PC-3 (cell line): ENCODE measurements at regions of chr13 and their contacts with region 1.

Region 1: DNA sequence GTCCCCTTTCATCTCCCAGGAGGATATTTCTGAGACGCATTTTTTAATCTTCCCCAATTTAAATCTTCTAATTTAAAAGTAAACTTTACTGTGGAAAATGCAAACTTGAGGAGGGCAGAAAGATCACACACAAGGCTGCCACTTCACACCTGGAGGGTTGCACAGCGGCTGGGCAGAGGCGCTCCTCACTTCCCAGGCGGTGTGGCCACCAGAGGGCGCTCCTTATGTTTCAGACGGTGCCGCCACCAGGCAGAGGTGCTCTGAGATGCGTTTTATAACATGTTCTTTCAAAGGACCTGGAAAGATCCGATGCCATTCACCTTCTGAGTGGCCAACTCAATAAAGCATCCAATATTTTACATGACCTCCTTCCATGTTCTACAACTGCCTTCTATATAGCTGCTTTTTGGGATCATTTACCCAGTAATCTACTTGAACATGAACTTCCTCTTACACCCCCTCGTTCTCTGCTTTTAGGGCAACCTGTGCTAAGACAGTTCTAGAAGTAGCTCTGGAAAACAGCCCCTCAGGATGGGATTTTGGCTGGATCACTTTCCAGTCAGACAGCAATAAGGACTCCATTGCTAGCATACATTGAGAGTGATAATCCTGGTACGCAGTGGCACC is 14.8 kb upstream of the MTUS2 start:
- DNase-seq: peak; percentile 41
- ATAC-seq: no peak
- H3K4me3 ChIP-seq: no peak overlapping the region
- H3K27ac ChIP-seq: no peak overlapping the region
- H3K4me1 ChIP-seq: no peaks in the 10 kb centered on the region
- H3K27me3 ChIP-seq: peaks cover 25% of the 10 kb centered on the region
- CTCF ChIP-seq: peak; percentile 62

Region 2: DNA sequence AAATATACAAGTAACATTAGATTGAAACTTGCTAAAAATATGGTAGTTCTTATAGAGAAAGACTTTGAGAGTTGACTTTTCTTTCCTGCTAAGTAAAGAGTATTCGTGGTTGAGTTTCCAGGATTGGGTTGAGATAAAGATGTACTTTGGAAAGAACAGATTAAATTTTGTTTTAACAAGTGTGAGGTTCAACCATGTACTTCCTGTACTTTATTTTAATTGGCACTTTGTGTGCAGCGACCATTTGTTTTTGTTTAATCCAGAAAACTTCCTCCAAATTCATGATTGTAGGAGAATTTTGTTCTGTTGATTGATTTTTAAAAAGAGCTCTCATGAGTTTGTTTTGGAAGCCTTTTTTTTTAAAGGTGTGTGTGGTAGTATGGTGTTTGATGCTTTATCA is 620.0 kb before region 1 on chr13:
- CTCF ChIA-PET with region 1: no interaction called
- POLR2A ChIA-PET with region 1: no interaction called
- intact Hi-C with region 1: no loop called
- DNase-seq: no peak
- ATAC-seq: no peak
- H3K4me3 ChIP-seq: no peak overlapping the region
- H3K27ac ChIP-seq: no peak overlapping the region
- H3K4me1 ChIP-seq: peaks cover 18% of the 10 kb centered on the region
- H3K27me3 ChIP-seq: no peaks in the 10 kb centered on the region
- CTCF ChIP-seq: no peak

Region 3: DNA sequence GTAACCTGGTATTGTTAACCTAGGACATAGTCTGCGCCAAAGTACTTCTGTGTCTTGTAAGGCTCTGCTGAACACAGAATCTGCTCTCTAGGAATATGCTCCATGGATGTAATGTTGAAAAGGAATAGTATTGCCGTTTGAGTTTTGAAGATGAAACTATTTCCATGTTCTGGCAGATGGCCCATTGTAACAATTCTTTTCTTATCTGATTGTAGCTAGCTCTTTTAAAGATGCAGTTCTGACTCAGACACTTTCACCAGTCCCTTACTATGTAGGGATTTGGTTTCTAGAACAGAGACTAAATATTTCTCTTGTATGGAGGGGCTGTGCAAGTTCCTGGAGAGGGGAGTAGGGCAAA is 200.4 kb after region 1 on chr13:
- CTCF ChIA-PET with region 1: no interaction called
- POLR2A ChIA-PET with region 1: no interaction called
- intact Hi-C with region 1: no loop called
- DNase-seq: no peak
- ATAC-seq: no peak
- H3K4me3 ChIP-seq: no peak overlapping the region
- H3K27ac ChIP-seq: no peak overlapping the region
- H3K4me1 ChIP-seq: no peaks in the 10 kb centered on the region
- H3K27me3 ChIP-seq: peaks cover 6% of the 10 kb centered on the region; the same call in 1 of the 2 replicates
- CTCF ChIP-seq: no peak

Region 4: DNA sequence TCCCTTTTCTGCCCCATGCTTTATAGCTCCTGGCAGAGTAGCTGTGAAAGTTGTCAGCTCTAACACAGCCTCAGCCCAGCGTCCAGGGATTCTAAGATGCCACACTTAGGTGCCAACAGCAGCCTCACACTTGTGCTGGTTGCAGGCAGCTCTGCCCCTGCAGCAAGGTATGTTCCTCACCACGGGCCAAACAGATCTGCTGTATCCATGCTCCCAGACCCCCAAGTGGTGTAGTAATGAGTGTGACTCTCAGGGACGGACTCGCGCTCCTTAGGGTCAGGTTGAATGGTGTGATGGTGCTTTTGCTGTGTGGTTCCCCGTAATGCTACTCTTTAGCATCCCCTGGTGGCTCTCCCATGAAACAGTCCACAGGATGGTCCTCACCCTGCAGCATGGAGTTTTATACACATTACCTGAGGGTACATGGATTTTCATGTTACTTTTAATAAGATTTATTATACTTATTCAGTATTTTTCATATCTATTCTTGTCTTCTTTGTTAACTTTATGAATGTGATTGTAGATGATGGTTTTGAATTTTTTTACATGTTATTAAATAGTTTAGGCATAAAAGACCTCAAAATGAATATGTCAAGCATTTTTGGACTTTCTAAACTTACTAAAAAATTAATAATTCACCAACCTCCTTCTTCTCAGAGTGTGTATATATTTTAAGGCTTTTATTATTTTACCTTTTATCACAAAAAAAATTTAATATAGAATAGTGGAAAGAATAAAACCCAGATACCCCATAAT is 557.7 kb after region 1 on chr13:
- CTCF ChIA-PET with region 1: no interaction called
- POLR2A ChIA-PET with region 1: no interaction called
- intact Hi-C with region 1: loop called (anchors 10 kb)
- DNase-seq: peak; percentile 69
- ATAC-seq: peak; percentile 73; the same call in 1 of the 2 replicates
- H3K4me3 ChIP-seq: no peak overlapping the region
- H3K27ac ChIP-seq: no peak overlapping the region
- H3K4me1 ChIP-seq: no peaks in the 10 kb centered on the region
- H3K27me3 ChIP-seq: peaks cover 34% of the 10 kb centered on the region
- CTCF ChIP-seq: peak; percentile 85